ENCODE measurements at regions of chr6 and their contacts with region 1.

Region 1: GRCh38 chr6:137975188-137975940 is 108.3 kb downstream of the TNFAIP3 start:
- DNase-seq: peak; percentile 38
- H3K4me3 Mint-ChIP-seq: peak overlapping the region; percentile 64
- H3K27ac Mint-ChIP-seq: peak overlapping the region; percentile 84
- H3K4me1 Mint-ChIP-seq: peaks cover 59% of the 10 kb centered on the region
- H3K27me3 Mint-ChIP-seq: no peaks in the 10 kb centered on the region

Region 2: DNA sequence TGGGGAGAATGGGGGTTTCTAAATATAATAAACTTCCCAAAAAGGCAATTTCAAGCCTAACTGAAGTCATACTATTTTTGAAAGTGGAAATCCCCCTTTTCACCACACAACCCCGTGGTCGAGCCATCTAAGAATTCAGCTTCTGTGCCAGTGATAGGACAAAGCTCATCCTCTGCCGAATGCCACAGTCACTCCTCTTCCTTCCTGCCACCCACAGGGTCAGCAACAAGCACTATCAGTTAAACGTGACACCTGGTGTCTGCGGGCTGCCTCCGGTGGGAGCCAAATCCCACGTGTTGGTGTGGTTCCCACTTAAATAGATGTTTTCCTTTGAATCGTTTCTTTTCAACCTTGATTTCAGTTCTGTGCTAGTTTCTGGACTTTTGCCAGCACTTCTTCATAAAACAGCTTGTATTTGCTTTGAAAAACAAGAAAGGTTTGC is 47.6 kb before region 1 on chr6:
- CTCF ChIA-PET with region 1: interaction called, 3 read pairs
- POLR2A ChIA-PET with region 1: interaction called, 4 read pairs
- intact Hi-C with region 1: loop called (anchors 1 kb)
- DNase-seq: peak; percentile 88
- H3K4me3 Mint-ChIP-seq: peak overlapping the region; percentile 65
- H3K27ac Mint-ChIP-seq: peak overlapping the region; percentile 90
- H3K4me1 Mint-ChIP-seq: peaks cover 46% of the 10 kb centered on the region
- H3K27me3 Mint-ChIP-seq: no peaks in the 10 kb centered on the region

Measured in activated CD4-positive, alpha-beta memory T cell treated with anti-CD3 and anti-CD28 coated beads for 36 hours (primary cell).